ENCODE measurements at regions of chr5 and their contacts with region 1.

Region 1: DNA sequence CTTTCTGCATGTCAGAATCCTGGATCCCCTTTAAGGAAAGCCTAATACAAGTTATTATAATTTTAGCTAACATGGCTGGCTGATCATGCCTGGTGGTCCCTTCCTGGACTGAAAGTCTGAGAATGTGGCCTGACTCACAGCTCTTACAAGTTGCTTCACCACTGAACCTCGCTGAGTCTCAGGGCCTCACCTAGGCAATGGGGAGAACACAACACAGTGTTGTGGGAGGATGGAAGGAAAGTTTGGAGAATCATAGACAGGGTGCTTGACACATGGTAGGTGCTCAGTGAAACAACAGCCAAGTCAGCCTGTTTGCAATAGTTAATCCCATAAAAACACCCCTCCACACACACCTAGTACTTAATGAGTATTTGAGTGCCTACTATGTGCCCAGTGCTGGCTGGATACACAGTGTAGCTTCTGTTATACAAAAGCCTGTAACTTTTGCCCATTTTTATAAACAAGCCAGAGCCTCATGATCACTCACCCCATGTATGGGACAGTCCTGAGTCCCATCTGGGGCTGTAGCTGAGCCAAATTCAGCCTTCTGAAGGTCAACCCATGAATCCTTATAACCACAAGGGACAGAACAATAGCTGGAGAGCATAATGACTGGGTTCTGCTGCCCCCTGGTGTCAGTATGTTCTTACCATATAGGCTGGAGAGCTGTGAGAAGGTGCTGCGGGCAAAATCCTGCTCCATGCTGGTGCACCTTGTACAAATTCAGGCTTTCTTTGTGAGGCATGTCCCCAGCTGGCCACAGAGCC is 3.9 kb downstream of the ACSL6 start:
- DNase-seq: peak; percentile 54 to 88
- ATAC-seq: peak; percentile 49 to 58 (median 54)
- H3K4me3 ChIP-seq: no peak overlapping the region
- H3K4me3 Mint-ChIP-seq: no peak overlapping the region
- H3K27ac ChIP-seq: no peak overlapping the region
- H3K27ac Mint-ChIP-seq: no peak overlapping the region
- H3K4me1 ChIP-seq: peaks cover 30% of the 10 kb centered on the region
- H3K4me1 Mint-ChIP-seq: peaks cover 19 to 37% of the 10 kb centered on the region in 2 donors
- H3K27me3 ChIP-seq: peaks cover 26% of the 10 kb centered on the region
- H3K27me3 Mint-ChIP-seq: peaks cover 26 to 29% of the 10 kb centered on the region in 2 donors
- CTCF ChIP-seq: peak; percentile 77

Region 2: DNA sequence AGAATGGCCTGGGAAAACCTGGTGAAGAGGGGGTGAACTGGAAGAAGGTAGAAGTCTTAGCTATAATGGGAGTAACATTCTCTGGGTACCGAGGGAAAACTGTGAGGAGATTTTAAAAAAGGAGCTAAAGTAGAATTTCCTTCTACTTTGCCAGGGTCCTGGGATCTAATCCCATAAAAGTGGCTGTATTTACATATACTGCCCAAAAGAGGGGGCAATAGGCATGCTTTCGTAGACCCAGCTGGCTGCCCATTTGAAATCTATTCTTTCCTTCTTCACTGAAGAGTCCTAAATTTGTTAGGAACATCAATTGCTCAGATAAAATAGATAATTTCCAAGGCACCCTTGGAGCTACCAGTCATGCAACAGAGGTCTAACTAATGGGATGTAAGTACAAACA is 584.5 kb before region 1 on chr5:
- intact Hi-C with region 1: loop called (anchors 5 kb)
- DNase-seq: peak in 1 of 2 donors; percentile 31
- ATAC-seq: no peak
- H3K4me3 ChIP-seq: no peak overlapping the region
- H3K4me3 Mint-ChIP-seq: no peak overlapping the region
- H3K27ac ChIP-seq: no peak overlapping the region
- H3K27ac Mint-ChIP-seq: peak overlapping the region in 1 of 2 donors; percentile 14
- H3K4me1 ChIP-seq: no peaks in the 10 kb centered on the region
- H3K4me1 Mint-ChIP-seq: no peaks in the 10 kb centered on the region
- H3K27me3 ChIP-seq: no peaks in the 10 kb centered on the region
- H3K27me3 Mint-ChIP-seq: no peaks in the 10 kb centered on the region
- CTCF ChIP-seq: no peak

Region 3: GRCh38 chr5:131589510-131590348 is 417.9 kb before region 1 on chr5:
- intact Hi-C with region 1: loop called (anchors 1 kb)
- DNase-seq: peak in 1 of 2 donors; percentile 81
- ATAC-seq: peak; percentile 65 to 78 (median 75)
- H3K4me3 ChIP-seq: no peak overlapping the region
- H3K4me3 Mint-ChIP-seq: no peak overlapping the region
- H3K27ac ChIP-seq: no peak overlapping the region
- H3K27ac Mint-ChIP-seq: no peak overlapping the region
- H3K4me1 ChIP-seq: peaks cover 14% of the 10 kb centered on the region
- H3K4me1 Mint-ChIP-seq: peaks cover 24 to 26% of the 10 kb centered on the region in 2 donors
- H3K27me3 ChIP-seq: no peaks in the 10 kb centered on the region
- H3K27me3 Mint-ChIP-seq: no peaks in the 10 kb centered on the region
- CTCF ChIP-seq: peak; percentile 92

Region 4: GRCh38 chr5:131796793-131797693 is 210.5 kb before region 1 on chr5 and contains the start of gene FNIP1:
- intact Hi-C with region 1: loop called (anchors 5 kb)
- DNase-seq: peak; percentile 97 to 99
- ATAC-seq: peak; percentile 91 to 99 (median 95)
- H3K4me3 ChIP-seq: peak within 1 kb of the TSS; percentile 72
- H3K4me3 Mint-ChIP-seq: peak within 1 kb of the TSS; percentile 93
- H3K27ac ChIP-seq: peak within 1 kb of the TSS; percentile 91
- H3K27ac Mint-ChIP-seq: peak within 1 kb of the TSS; percentile 86 to 94
- H3K4me1 ChIP-seq: peaks cover 6% of the 10 kb centered on the region
- H3K4me1 Mint-ChIP-seq: peaks cover 24 to 29% of the 10 kb centered on the region in 2 donors
- H3K27me3 ChIP-seq: no peaks in the 10 kb centered on the region
- H3K27me3 Mint-ChIP-seq: no peaks in the 10 kb centered on the region
- CTCF ChIP-seq: no peak
- total RNA-seq, gene FNIP1: 49.6 to 54.6 (median 50.8) TPM

Region 5: DNA sequence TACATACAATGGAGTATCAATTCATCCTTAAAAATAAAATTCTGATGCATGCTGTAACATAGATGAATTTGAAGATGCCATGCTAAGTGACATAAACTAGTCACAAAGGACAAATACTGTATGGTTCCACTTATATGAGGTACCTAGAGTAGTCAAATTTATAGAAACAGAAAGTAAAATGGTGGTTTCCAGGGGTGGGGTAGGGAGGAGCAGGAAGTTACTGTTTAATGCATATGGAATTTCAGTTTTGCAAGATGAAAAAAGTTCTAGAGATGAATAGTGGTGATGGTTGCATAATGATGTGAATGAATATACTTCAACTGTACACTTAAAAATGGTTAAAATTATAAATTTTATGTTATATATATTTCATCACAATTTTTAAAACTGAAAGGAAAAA is 153.4 kb before region 1 on chr5:
- intact Hi-C with region 1: no loop called
- DNase-seq: peak in 1 of 2 donors; percentile 31
- ATAC-seq: peak; percentile 60 to 70 (median 67)
- H3K4me3 ChIP-seq: no peak overlapping the region
- H3K4me3 Mint-ChIP-seq: no peak overlapping the region
- H3K27ac ChIP-seq: peak overlapping the region; percentile 25
- H3K27ac Mint-ChIP-seq: peak overlapping the region; percentile 65 to 70
- H3K4me1 ChIP-seq: no peaks in the 10 kb centered on the region
- H3K4me1 Mint-ChIP-seq: peaks cover 15 to 18% of the 10 kb centered on the region in 2 donors
- H3K27me3 ChIP-seq: peaks cover 3% of the 10 kb centered on the region
- H3K27me3 Mint-ChIP-seq: peaks cover 3 to 8% of the 10 kb centered on the region in 2 donors
- CTCF ChIP-seq: no peak

Measured in natural killer cell (primary cell).